HepG2 (cell line): ENCODE measurements at regions of chr7 and their contacts with region 1.

Region 1: GRCh38 chr7:43674584-43675436 is 54.5 kb downstream of the COA1 start:
- DNase-seq: peak; percentile 92
- ATAC-seq: peak; percentile 89
- H3K4me3 ChIP-seq: no peak overlapping the region
- H3K27ac ChIP-seq: peak overlapping the region; percentile 69
- H3K4me1 ChIP-seq: peaks cover 32% of the 10 kb centered on the region
- H3K27me3 ChIP-seq: no peaks in the 10 kb centered on the region
- CTCF ChIP-seq: no peak
- EP300 ChIP-seq: peak; percentile 49 to 88; a peak in 2 of 4 replicates
- POLR2A ChIP-seq: no peak
- RAD21 ChIP-seq: no peak

Region 2: DNA sequence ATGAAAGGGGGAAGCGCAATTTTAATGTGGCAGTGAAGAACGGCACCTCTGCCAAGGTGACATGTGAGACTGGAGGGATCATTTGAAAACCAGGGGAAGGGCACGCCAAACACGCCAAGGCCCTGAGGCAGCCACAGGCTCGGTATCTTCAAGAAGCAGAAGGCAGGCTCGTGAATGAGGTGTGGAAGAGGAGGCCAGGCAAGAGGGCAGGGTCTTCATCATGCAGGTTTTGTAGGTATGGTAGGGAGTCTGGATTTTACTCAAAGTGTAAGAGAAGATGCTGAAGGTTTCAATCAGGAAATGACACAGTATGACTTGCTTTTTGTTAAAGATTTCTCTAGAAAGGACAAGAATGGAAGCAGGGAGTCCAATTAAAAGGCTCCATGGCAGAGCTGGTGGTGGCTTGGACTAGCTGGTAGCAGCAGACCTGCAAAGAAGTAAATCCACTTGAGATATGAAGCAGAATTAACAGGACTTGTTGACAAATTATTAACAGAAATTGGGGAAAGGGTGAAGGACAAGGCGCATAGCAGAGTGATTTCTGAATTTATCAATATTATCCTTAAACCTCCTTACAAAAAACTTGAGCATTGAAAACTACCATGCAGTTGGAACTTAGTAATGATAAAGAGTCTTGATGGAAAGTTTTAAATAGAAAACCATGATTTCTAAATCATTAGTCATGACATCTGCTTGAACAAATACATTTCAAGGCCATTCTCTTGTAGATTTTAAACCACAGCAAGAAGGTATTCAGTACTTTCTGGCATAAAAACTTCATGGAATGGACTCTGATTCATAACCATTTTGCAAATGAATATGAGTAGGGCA is 15.9 kb before region 1 on chr7:
- CTCF ChIA-PET with region 1: no interaction called
- POLR2A ChIA-PET with region 1: no interaction called
- in situ Hi-C with region 1: no loop called
- intact Hi-C with region 1: loop called (anchors 1 kb)
- DNase-seq: peak; percentile 81
- ATAC-seq: peak; percentile 80
- H3K4me3 ChIP-seq: peak overlapping the region in 1 of 3 experiments; percentile 31; a peak in 1 of 6 replicates
- H3K27ac ChIP-seq: peak overlapping the region; percentile 94
- H3K4me1 ChIP-seq: peaks cover 58% of the 10 kb centered on the region
- H3K27me3 ChIP-seq: no peaks in the 10 kb centered on the region
- CTCF ChIP-seq: no peak
- EP300 ChIP-seq: peak in 1 of 2 experiments; percentile 78; a peak in 1 of 4 replicates
- POLR2A ChIP-seq: no peak
- RAD21 ChIP-seq: no peak

Region 3: DNA sequence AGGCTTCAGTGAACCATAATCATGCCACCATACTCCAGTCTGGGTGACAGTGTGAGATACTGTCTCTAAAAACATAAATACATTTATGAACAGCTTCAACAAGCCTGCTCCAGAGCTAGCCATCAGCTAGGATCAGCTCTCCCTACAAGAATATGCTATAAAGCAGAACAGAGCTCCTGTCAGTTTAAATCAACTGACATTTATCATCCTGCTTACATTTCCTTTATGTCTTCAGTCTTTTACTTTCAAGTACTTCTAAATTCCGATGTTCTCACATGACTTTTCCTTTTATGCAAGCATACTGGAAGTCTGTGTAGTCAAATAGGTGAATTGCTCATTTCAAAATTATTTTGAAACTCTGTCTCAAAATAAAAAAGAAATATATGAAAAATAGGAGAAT is 10.1 kb before region 1 on chr7:
- CTCF ChIA-PET with region 1: no interaction called
- POLR2A ChIA-PET with region 1: interaction called, 3 read pairs
- in situ Hi-C with region 1: no loop called
- intact Hi-C with region 1: loop called (anchors 1 kb)
- DNase-seq: no peak
- ATAC-seq: no peak
- H3K4me3 ChIP-seq: no peak overlapping the region
- H3K27ac ChIP-seq: peak overlapping the region; percentile 11
- H3K4me1 ChIP-seq: peaks cover 41% of the 10 kb centered on the region
- H3K27me3 ChIP-seq: no peaks in the 10 kb centered on the region
- CTCF ChIP-seq: no peak
- EP300 ChIP-seq: no peak
- POLR2A ChIP-seq: no peak
- RAD21 ChIP-seq: no peak

Region 4: DNA sequence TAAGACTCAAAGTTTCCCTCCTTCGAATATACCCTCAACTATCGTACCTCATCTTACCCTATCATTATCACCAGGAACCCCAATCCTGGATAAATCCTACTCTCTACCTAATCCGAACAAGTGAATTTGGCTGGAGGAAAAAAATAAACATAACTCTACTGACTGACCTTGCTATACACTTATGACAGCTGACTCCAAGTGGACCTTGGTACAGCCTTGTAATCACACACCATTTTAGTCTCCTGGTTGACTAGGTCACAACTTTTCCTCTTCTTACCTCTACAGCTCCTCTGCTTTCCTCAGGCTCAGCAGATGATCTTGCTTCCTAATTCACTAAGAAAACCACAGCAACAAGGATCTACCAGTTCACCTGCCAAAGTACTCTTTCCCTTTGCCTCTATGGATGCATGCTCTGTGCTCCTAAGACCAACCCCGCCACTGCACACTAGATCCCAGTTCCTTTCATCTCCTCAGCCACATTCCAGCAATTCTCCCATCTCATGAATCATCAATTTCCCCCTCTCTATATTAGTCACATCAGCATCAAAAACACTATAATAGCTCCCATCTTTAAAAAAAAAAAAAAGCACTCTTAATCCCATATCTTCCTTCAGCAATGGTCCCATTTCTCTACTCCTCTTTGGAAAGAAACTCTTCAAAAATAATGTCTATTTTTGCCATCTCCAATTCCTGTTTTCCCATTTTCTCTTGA is 19.0 kb after region 1 on chr7:
- CTCF ChIA-PET with region 1: no interaction called
- POLR2A ChIA-PET with region 1: no interaction called
- in situ Hi-C with region 1: no loop called
- intact Hi-C with region 1: loop called (anchors 2 kb)
- DNase-seq: peak; percentile 22
- ATAC-seq: peak; percentile 69
- H3K4me3 ChIP-seq: no peak overlapping the region
- H3K27ac ChIP-seq: peak overlapping the region; percentile 26
- H3K4me1 ChIP-seq: peaks cover 60% of the 10 kb centered on the region
- H3K27me3 ChIP-seq: no peaks in the 10 kb centered on the region
- CTCF ChIP-seq: no peak
- EP300 ChIP-seq: no peak
- POLR2A ChIP-seq: no peak
- RAD21 ChIP-seq: no peak